AG04450 (cell line): ENCODE measurements at regions of chr10 and their contacts with region 1.

Region 1: GRCh38 chr10:102503281-102504220 is at the start of gene SUFU:
- DNase-seq: peak; percentile 98
- H3K4me3 ChIP-seq: peak within 1 kb of the TSS; percentile 98
- H3K27ac ChIP-seq: peak within 1 kb of the TSS; percentile 39
- H3K27me3 ChIP-seq: no peaks in the 10 kb centered on the region
- CTCF ChIP-seq: peak; percentile 95
- polyA plus RNA-seq, gene SUFU: 11.0 and 13.2 TPM in 2 replicates

Region 2: GRCh38 chr10:101903827-101904550 is 599.6 kb before region 1 on chr10:
- CTCF ChIA-PET with region 1: no interaction called
- POLR2A ChIA-PET with region 1: no interaction called
- DNase-seq: no peak
- H3K4me3 ChIP-seq: no peak overlapping the region
- H3K27ac ChIP-seq: no peak overlapping the region
- H3K27me3 ChIP-seq: no peaks in the 10 kb centered on the region
- CTCF ChIP-seq: no peak

Region 3: GRCh38 chr10:102517553-102517952 is 14.0 kb after region 1 on chr10:
- CTCF ChIA-PET with region 1: interaction called, 23 read pairs
- POLR2A ChIA-PET with region 1: no interaction called
- DNase-seq: peak; percentile 44
- H3K4me3 ChIP-seq: no peak overlapping the region
- H3K27ac ChIP-seq: no peak overlapping the region
- H3K27me3 ChIP-seq: no peaks in the 10 kb centered on the region
- CTCF ChIP-seq: no peak

Region 4: DNA sequence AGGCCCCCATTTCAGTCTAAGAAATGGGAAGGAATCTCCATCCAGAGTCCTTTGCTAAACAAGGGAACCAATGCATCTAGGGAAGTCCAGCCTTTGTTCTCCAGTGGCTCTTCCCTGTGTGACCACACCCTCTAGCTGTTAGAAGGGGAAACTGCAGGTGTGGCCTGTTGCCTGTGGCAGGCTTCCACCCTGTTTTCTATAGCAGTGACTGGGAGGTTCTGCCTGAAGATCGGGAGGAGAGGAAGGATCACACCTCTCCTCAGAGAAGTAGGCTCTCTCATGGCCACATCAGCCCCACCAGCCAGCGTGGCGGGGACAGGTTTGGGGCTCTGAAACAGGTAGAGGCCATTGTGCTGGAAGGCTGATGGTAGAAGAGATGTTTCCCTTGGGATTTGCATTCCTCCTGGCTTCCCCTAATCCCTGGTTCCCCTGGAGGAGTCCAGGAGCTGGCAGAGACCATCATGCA is 93.0 kb after region 1 on chr10:
- CTCF ChIA-PET with region 1: interaction called, 18 read pairs
- POLR2A ChIA-PET with region 1: interaction called, 9 read pairs
- DNase-seq: no peak
- H3K4me3 ChIP-seq: no peak overlapping the region
- H3K27ac ChIP-seq: no peak overlapping the region
- H3K27me3 ChIP-seq: no peaks in the 10 kb centered on the region
- CTCF ChIP-seq: peak; percentile 80